GM10248 (cell line): ENCODE measurements at regions of chr4 and their contacts with region 1.

Region 1: GRCh38 chr4:165464813-165465381 is 86.1 kb downstream of the CPE start:
- DNase-seq: peak; percentile 59
- CTCF ChIP-seq: peak; percentile 63

Region 2: GRCh38 chr4:165450871-165451270 is 14.0 kb before region 1 on chr4:
- CTCF ChIA-PET with region 1: interaction called, 11 read pairs
- POLR2A ChIA-PET with region 1: no interaction called
- DNase-seq: no peak
- CTCF ChIP-seq: no peak